H1 (cell line): ENCODE measurements at regions of chr6 and their contacts with region 1.

Region 1: GRCh38 chr6:31834434-31835198 is 7.1 kb downstream of the HSPA1B start:
- DNase-seq: peak in 1 of 2 experiments; percentile 89
- H3K4me3 ChIP-seq: peak overlapping the region; percentile 70 to 99 (median 92)
- H3K27ac ChIP-seq: peak overlapping the region; percentile 96
- H3K4me1 ChIP-seq: peaks cover 2 to 9% (median 6%) of the 10 kb centered on the region in 4 experiments; a peak in 5 of 7 replicates
- H3K27me3 ChIP-seq: no peaks in the 10 kb centered on the region
- CTCF ChIP-seq: no peak
- EP300 ChIP-seq: no peak; a peak in 1 of 3 replicates
- POLR2A ChIP-seq: peak; percentile 98 to 99
- RAD21 ChIP-seq: no peak

Region 2: DNA sequence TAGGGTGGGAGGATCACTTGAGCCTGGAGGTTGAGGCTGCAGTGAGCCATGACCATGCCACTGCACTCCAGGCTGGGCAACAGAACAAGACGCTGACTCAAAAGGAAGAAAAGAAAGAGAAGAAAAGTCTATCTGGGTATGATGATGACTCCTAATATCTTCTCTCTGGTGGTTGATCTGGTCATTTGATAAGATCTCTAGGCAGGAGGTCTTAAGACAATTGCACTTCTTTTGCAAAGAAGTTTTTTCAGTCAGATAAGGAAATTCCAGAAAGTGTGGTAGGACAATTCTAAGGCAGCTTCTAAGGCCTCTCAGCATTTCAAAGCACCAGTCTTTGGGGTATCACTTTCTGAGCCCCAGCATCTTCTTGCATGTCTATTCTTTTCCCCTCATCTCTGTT is 227.3 kb before region 1 on chr6:
- CTCF ChIA-PET with region 1: no interaction called
- POLR2A ChIA-PET with region 1: no interaction called
- DNase-seq: no peak
- H3K4me3 ChIP-seq: no peak overlapping the region
- H3K27ac ChIP-seq: no peak overlapping the region
- H3K4me1 ChIP-seq: no peaks in the 10 kb centered on the region
- H3K27me3 ChIP-seq: no peaks in the 10 kb centered on the region; a peak in 1 of 7 replicates
- CTCF ChIP-seq: no peak
- EP300 ChIP-seq: no peak
- POLR2A ChIP-seq: no peak
- RAD21 ChIP-seq: no peak

Region 3: GRCh38 chr6:31776989-31777666 is 57.5 kb before region 1 on chr6 and contains the start of gene VWA7:
- CTCF ChIA-PET with region 1: interaction called, 16 read pairs
- POLR2A ChIA-PET with region 1: interaction called, 11 read pairs
- DNase-seq: peak in 1 of 2 experiments; percentile 63
- H3K4me3 ChIP-seq: no peak within 1 kb of the TSS
- H3K27ac ChIP-seq: peak within 1 kb of the TSS; percentile 26; the same call in 1 of the 2 replicates
- H3K4me1 ChIP-seq: peaks cover 0 to 7% (median 3%) of the 10 kb centered on the region in 4 experiments; a peak in 4 of 7 replicates
- H3K27me3 ChIP-seq: no peaks in the 10 kb centered on the region; a peak in 1 of 7 replicates
- CTCF ChIP-seq: no peak
- EP300 ChIP-seq: no peak
- POLR2A ChIP-seq: 0 out of 3 replicates have a peak, but pooled peaks of 1 of the 2 experiments have one; percentile 19
- RAD21 ChIP-seq: no peak
- total RNA-seq, gene VWA7: 1.5 and 2.1 TPM in 2 replicates

Region 4: GRCh38 chr6:31806465-31807272 is 27.9 kb before region 1 on chr6 and contains the start of gene LSM2:
- CTCF ChIA-PET with region 1: interaction called, 21 read pairs
- POLR2A ChIA-PET with region 1: interaction called, 45 read pairs
- DNase-seq: peak in 1 of 2 experiments; percentile 99
- H3K4me3 ChIP-seq: peak within 1 kb of the TSS; percentile 76 to 96 (median 86)
- H3K27ac ChIP-seq: peak within 1 kb of the TSS; percentile 91
- H3K4me1 ChIP-seq: peaks cover 0 to 2% (median 0%) of the 10 kb centered on the region in 4 experiments; a peak in 1 of 7 replicates
- H3K27me3 ChIP-seq: no peaks in the 10 kb centered on the region
- CTCF ChIP-seq: no peak
- EP300 ChIP-seq: no peak
- POLR2A ChIP-seq: peak; percentile 58 to 69
- RAD21 ChIP-seq: 0 out of 4 replicates have a peak, but pooled peaks have one; percentile 1 to 8
- total RNA-seq, gene LSM2: 127 and 132 TPM in 2 replicates

Region 5: DNA sequence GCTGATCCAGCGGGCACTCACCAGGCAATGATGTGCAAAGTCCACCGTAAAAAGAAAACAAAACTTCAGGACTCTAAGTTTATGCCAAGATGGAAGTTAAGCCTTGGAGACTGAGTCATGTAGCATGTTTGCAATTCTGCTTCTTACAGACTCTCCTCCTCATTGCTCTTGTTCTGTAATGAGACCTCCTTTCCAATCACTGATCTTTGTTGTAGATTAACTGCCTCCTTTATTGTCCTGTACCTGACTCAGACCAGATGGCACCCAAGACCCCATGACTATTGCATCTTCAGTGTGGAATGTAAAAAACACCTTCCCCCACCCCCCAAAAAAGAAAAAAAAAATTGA is 16.8 kb after region 1 on chr6:
- CTCF ChIA-PET with region 1: interaction called, 5 read pairs
- POLR2A ChIA-PET with region 1: interaction called, 189 read pairs
- DNase-seq: no peak
- H3K4me3 ChIP-seq: no peak overlapping the region
- H3K27ac ChIP-seq: no peak overlapping the region
- H3K4me1 ChIP-seq: no peaks in the 10 kb centered on the region
- H3K27me3 ChIP-seq: no peaks in the 10 kb centered on the region
- CTCF ChIP-seq: no peak
- EP300 ChIP-seq: no peak
- POLR2A ChIP-seq: no peak
- RAD21 ChIP-seq: no peak

Region 6: GRCh38 chr6:31971993-31972708 is 137.5 kb after region 1 on chr6 and contains the start of gene DXO:
- CTCF ChIA-PET with region 1: no interaction called
- POLR2A ChIA-PET with region 1: interaction called, 11 read pairs
- DNase-seq: peak; percentile 80 to 98
- H3K4me3 ChIP-seq: peak within 1 kb of the TSS; percentile 68 to 94 (median 84)
- H3K27ac ChIP-seq: peak within 1 kb of the TSS; percentile 90
- H3K4me1 ChIP-seq: peaks cover 0 to 9% (median 5%) of the 10 kb centered on the region in 4 experiments; a peak in 5 of 7 replicates
- H3K27me3 ChIP-seq: no peaks in the 10 kb centered on the region; a peak in 1 of 7 replicates
- CTCF ChIP-seq: no peak
- EP300 ChIP-seq: no peak
- POLR2A ChIP-seq: peak in 1 of 2 experiments; percentile 79; a peak in 2 of 3 replicates
- RAD21 ChIP-seq: no peak
- total RNA-seq, gene DXO: 14.7 and 16.2 TPM in 2 replicates

Region 7: GRCh38 chr6:32244946-32245398 is 410.4 kb after region 1 on chr6:
- CTCF ChIA-PET with region 1: no interaction called
- POLR2A ChIA-PET with region 1: no interaction called
- DNase-seq: peak; percentile 17 to 93
- H3K4me3 ChIP-seq: peak overlapping the region in 1 of 4 experiments; percentile 37; a peak in 2 of 8 replicates
- H3K27ac ChIP-seq: no peak overlapping the region
- H3K4me1 ChIP-seq: no peaks in the 10 kb centered on the region
- H3K27me3 ChIP-seq: no peaks in the 10 kb centered on the region
- CTCF ChIP-seq: peak; percentile 85 to 91 (median 90)
- EP300 ChIP-seq: no peak
- POLR2A ChIP-seq: no peak
- RAD21 ChIP-seq: peak; percentile 87 to 90